Calu3 (cell line): ENCODE measurements at regions of chr16 and their contacts with region 1.

Region 1: DNA sequence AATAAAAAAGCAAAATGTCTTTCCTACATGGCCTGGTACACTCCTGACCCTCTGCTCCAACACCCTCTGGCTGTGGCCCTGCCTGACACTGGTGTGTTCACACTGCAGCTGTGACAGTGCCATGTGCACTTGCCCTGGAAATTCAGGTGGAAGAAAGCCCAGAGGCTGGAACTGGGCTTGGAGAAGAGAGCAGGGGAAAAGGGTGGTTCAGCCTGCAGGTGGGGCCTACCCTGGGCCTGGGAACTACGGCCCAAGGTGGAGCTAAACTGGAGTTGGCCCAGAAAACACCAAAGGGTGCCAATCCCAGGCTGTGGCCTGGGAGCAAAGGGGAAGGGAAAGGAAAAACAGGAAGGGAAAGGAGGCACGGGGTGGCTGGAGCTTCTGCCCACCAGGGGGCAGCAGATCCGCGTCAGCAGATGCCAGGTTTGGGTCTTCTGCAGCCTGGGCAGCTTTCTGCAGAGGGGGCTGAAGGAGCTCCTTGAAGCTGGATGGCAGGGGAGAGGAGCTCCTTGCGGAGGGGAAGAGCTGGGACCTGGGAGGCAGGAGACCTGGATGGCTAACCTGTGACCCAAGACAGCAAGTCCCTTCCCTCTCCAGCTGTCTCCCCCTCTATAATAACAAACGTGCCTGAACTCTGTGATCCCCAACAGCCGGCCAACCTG is 15.4 kb upstream of the CTCF start:
- DNase-seq: peak; percentile 87
- H3K4me3 Mint-ChIP-seq: no peak overlapping the region
- H3K27ac Mint-ChIP-seq: peak overlapping the region; percentile 20
- H3K4me1 Mint-ChIP-seq: peaks cover 16% of the 10 kb centered on the region
- H3K27me3 Mint-ChIP-seq: no peaks in the 10 kb centered on the region
- CTCF ChIP-seq: peak; percentile 97

Region 2: DNA sequence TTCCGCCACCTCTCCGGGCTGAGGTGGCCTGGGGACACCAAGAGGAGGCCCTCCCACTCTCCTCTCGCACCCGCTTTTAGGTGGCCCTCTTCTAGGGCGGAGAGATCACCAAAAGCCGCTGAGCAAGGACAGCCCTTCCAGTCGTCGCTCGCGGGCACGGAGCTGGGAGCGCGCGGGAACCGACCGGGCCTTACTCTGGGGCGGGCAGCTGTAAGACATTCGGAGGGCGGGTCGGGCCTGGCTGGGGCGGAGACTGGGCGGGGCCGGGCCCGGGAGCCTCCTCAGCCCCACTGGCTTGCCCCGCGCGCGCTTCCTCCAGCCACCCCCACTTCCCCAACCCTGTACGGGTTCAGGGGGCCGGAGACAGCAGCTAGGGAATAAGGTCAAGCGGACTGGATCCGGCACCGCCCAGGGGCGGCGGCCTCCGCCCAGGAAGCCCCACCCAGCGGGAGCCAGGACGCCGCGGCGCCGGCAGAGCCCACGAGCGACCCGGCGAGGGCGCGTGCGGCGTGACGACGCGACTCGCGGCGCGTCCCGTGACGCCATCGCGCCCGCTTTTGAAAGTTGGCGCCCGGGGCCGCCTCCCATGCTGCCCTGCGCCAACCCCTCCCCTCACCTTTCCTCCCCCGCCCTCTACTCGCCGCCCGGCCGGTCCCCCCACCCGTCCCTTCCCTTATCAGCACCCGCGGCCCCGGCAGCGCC is 15.1 kb after region 1 on chr16:
- CTCF ChIA-PET with region 1: interaction called, 21 read pairs
- intact Hi-C with region 1: no loop called
- DNase-seq: peak; percentile 97
- H3K4me3 Mint-ChIP-seq: peak overlapping the region; percentile 95
- H3K27ac Mint-ChIP-seq: peak overlapping the region; percentile 93
- H3K4me1 Mint-ChIP-seq: peaks cover 23% of the 10 kb centered on the region
- H3K27me3 Mint-ChIP-seq: no peaks in the 10 kb centered on the region
- CTCF ChIP-seq: no peak

Region 3: GRCh38 chr16:67641779-67642708 is 95.2 kb after region 1 on chr16:
- CTCF ChIA-PET with region 1: interaction called, 14 read pairs
- intact Hi-C with region 1: no loop called
- DNase-seq: no peak
- H3K4me3 Mint-ChIP-seq: no peak overlapping the region
- H3K27ac Mint-ChIP-seq: no peak overlapping the region
- H3K4me1 Mint-ChIP-seq: no peaks in the 10 kb centered on the region
- H3K27me3 Mint-ChIP-seq: peaks cover 24% of the 10 kb centered on the region
- CTCF ChIP-seq: no peak

Region 4: DNA sequence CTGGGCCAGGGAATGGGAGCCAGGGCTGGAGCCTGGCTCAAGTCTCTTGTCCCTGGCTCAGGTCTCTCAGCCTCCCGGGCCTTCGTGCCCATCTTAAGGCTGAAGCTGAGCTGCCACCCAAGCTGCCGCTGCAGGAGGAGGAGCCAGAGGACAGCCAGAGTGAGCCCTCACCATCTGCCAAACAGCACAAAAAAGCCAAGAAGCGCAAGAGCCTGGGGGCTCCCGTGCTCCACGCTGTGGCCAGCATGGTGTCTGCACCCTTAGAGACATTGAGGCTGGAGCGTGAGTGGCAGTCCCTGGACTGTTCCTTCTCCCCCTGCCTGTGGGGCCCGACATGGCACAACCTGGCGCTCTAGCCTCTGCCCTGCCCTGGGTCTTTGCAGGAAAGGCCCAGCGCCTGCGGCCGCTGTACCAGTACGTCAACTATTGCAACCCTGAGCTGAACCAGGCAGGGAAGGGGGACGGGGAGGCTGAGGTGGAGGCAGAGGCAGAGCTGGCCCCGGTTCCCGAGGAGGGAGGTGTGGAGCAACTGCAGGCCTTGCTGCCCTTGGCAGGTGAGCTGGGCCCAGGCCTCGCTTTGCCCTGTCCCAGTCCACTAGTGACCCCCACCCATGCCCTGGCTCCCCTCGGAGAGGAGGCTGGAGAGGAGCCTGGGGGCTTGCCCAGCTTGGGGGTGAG is 121.1 kb after region 1 on chr16:
- CTCF ChIA-PET with region 1: interaction called, 11 read pairs
- intact Hi-C with region 1: loop called (anchors 5 kb)
- DNase-seq: peak; percentile 93
- H3K4me3 Mint-ChIP-seq: peak overlapping the region; percentile 88
- H3K27ac Mint-ChIP-seq: no peak overlapping the region
- H3K4me1 Mint-ChIP-seq: no peaks in the 10 kb centered on the region
- H3K27me3 Mint-ChIP-seq: no peaks in the 10 kb centered on the region
- CTCF ChIP-seq: peak; percentile 59